RWPE1 (cell line): ENCODE measurements at regions of chr19 and their contacts with region 1.

Region 1: DNA sequence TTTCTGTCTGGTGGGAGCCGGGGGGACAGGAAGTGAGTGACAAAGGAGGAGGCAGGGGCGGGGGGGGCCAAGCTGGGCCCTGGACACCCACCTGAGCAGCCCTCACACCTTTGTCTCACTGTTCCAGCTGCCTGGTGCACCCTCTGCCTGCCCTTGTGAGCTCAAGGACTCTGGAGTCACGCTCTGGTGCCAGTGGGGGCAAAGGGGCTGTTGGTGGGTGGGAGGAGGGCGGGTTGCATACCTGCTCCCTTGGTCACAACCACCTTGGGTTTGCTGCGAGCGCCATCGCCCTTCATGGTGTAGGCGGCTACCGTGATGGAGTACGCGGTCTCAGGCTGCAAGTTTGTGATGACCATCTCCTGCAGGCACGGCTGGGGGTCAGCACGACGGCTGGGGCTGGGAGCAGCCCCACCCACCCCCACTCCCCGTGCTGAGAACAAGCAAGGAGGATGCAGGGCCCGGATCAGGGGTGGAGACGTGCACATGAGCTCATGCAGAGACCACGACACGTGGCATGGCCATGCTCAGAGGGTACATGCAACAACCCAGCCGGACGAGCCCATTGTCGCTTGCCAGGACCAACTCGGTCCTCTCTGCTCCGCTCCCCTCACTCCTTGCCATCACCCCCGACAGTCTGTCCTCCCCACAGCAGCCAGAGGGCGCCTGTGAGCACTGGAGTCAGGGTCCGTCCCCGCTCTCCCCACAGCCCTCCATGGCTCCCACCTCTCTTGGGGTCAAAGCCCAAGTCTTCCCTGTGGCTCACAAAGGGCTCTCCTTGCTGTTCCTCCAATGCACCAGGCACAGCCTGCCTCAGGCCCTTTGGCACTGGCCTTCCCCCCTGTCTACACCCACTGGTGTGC is 114.9 kb downstream of the PTPRS start:
- DNase-seq: no peak
- H3K27ac ChIP-seq: no peak overlapping the region
- CTCF ChIP-seq: peak; percentile 34

Region 2: GRCh38 chr19:5196832-5197231 is 28.9 kb before region 1 on chr19:
- CTCF ChIA-PET with region 1: no interaction called
- POLR2A ChIA-PET with region 1: interaction called, 11 read pairs
- DNase-seq: no peak
- H3K27ac ChIP-seq: no peak overlapping the region
- CTCF ChIP-seq: no peak